HEK293 (cell line): ENCODE measurements at regions of chr14 and their contacts with region 1.

Region 1: GRCh38 chr14:38721822-38722431 is 381.1 kb downstream of the SEC23A start:
- H3K4me3 ChIP-seq: no peak overlapping the region
- H3K27ac ChIP-seq: no peak overlapping the region
- H3K4me1 ChIP-seq: no peaks in the 10 kb centered on the region
- CTCF ChIP-seq: no peak

Region 2: DNA sequence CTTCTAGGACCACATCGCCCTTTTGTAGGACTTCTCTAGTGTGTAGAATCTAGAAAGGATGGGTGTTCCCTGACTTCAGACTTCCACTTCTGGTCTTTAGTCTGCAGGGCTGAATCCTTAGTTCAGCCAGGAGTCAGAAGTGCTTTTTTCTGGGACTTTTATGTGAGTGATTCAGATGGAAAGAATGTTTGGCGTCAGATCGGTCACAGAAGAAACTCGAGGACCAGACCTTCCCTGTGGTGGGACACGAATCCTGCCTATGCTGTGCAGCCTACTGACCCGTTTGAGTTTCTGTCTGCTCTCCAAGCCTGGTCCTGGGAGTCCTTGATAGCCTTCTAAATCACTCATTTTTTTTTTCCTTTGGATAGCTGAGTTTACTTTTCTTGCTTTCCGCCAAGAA is 679.6 kb before region 1 on chr14:
- CTCF ChIA-PET with region 1: no interaction called
- POLR2A ChIA-PET with region 1: no interaction called
- H3K4me3 ChIP-seq: no peak overlapping the region
- H3K27ac ChIP-seq: no peak overlapping the region
- H3K4me1 ChIP-seq: no peaks in the 10 kb centered on the region
- CTCF ChIP-seq: no peak

Region 3: GRCh38 chr14:38710881-38711280 is 11.0 kb before region 1 on chr14:
- CTCF ChIA-PET with region 1: interaction called, 11 read pairs
- POLR2A ChIA-PET with region 1: no interaction called
- H3K4me3 ChIP-seq: no peak overlapping the region
- H3K27ac ChIP-seq: no peak overlapping the region
- H3K4me1 ChIP-seq: no peaks in the 10 kb centered on the region
- CTCF ChIP-seq: no peak

Region 4: GRCh38 chr14:38867561-38868150 is 145.7 kb after region 1 on chr14:
- CTCF ChIA-PET with region 1: interaction called, 17 read pairs
- POLR2A ChIA-PET with region 1: no interaction called
- H3K4me3 ChIP-seq: no peak overlapping the region
- H3K27ac ChIP-seq: no peak overlapping the region
- H3K4me1 ChIP-seq: no peaks in the 10 kb centered on the region
- CTCF ChIP-seq: peak; percentile 26; the same call in 1 of the 2 replicates

Region 5: GRCh38 chr14:39015360-39015961 is 293.5 kb after region 1 on chr14:
- CTCF ChIA-PET with region 1: interaction called, 15 read pairs
- POLR2A ChIA-PET with region 1: no interaction called
- H3K4me3 ChIP-seq: no peak overlapping the region
- H3K27ac ChIP-seq: no peak overlapping the region
- H3K4me1 ChIP-seq: no peaks in the 10 kb centered on the region
- CTCF ChIP-seq: no peak

Region 6: GRCh38 chr14:39034481-39035296 is 312.8 kb after region 1 on chr14:
- CTCF ChIA-PET with region 1: interaction called, 13 read pairs
- POLR2A ChIA-PET with region 1: no interaction called
- H3K4me3 ChIP-seq: no peak overlapping the region
- H3K27ac ChIP-seq: no peak overlapping the region
- H3K4me1 ChIP-seq: no peaks in the 10 kb centered on the region; the same call in 1 of the 2 replicates
- CTCF ChIP-seq: no peak